H1 (cell line): ENCODE measurements at regions of chr2 and their contacts with region 1.

Region 1: GRCh38 chr2:217918308-217919024 is 84.3 kb downstream of the TNS1 start:
- DNase-seq: no peak
- H3K4me3 ChIP-seq: no peak overlapping the region
- H3K27ac ChIP-seq: no peak overlapping the region
- H3K4me1 ChIP-seq: peaks cover 9 to 48% (median 33%) of the 10 kb centered on the region in 4 experiments
- H3K27me3 ChIP-seq: peaks cover 0 to 4% (median 0%) of the 10 kb centered on the region in 4 experiments; a peak in 3 of 7 replicates
- CTCF ChIP-seq: peak; percentile 53 to 63 (median 55)
- EP300 ChIP-seq: no peak
- POLR2A ChIP-seq: no peak
- RAD21 ChIP-seq: peak in 1 of 2 experiments; percentile 45; a peak in 3 of 4 replicates

Region 2: DNA sequence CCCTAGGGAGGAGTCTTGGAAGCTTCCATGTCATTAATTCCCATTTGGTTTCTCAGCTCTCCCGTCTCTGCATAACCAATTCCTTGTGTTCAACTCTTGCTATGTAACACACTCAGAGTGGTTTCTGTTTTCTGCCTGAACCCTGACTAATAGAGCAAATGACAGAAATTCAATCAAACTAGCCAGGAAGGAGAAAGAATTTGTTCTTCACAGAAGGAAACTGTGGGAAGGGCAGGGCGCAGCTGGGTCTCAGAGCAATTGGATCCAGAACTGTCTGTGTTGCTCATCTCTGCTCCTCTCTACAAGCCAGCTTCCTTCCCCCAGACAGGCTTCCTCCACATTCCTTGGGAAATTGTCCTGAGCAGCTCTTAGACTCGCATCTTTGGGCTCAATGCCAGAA is 185.5 kb before region 1 on chr2:
- CTCF ChIA-PET with region 1: no interaction called
- POLR2A ChIA-PET with region 1: no interaction called
- DNase-seq: no peak
- H3K4me3 ChIP-seq: no peak overlapping the region
- H3K27ac ChIP-seq: no peak overlapping the region
- H3K4me1 ChIP-seq: no peaks in the 10 kb centered on the region
- H3K27me3 ChIP-seq: no peaks in the 10 kb centered on the region
- CTCF ChIP-seq: no peak
- EP300 ChIP-seq: no peak
- POLR2A ChIP-seq: no peak
- RAD21 ChIP-seq: no peak

Region 3: DNA sequence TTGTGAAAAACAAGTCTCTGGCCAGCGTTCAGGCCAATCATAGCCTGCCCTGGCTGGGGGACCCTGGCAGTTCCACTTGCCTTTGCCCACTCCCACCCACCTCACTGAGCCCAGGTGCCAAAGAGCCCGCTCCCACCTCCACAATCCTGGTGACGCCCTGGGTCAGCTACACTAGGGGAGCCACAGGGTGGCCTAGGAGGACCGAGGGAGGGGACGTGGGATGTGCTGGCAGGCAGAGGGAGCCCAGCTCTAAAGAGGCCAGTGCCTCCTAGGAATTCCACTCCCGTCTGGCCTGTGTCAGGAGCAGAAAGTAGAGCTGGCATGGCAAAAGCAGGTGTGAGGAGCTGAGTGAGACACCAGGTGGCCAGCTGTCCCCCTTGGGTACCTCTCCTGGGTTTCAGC is 35.1 kb after region 1 on chr2:
- CTCF ChIA-PET with region 1: interaction called, 14 read pairs
- POLR2A ChIA-PET with region 1: no interaction called
- DNase-seq: no peak
- H3K4me3 ChIP-seq: no peak overlapping the region
- H3K27ac ChIP-seq: no peak overlapping the region
- H3K4me1 ChIP-seq: peaks cover 0 to 10% (median 3%) of the 10 kb centered on the region in 4 experiments; a peak in 6 of 7 replicates
- H3K27me3 ChIP-seq: peaks cover 0 to 3% (median 0%) of the 10 kb centered on the region in 4 experiments; a peak in 1 of 7 replicates
- CTCF ChIP-seq: no peak
- EP300 ChIP-seq: no peak
- POLR2A ChIP-seq: no peak
- RAD21 ChIP-seq: no peak

Region 4: GRCh38 chr2:217978536-217979165 is 60.2 kb after region 1 on chr2:
- CTCF ChIA-PET with region 1: interaction called, 14 read pairs
- POLR2A ChIA-PET with region 1: interaction called, 3 read pairs
- DNase-seq: peak in 1 of 2 experiments; percentile 87
- H3K4me3 ChIP-seq: peak overlapping the region; percentile 37 to 78 (median 59)
- H3K27ac ChIP-seq: no peak overlapping the region
- H3K4me1 ChIP-seq: peaks cover 3 to 12% (median 7%) of the 10 kb centered on the region in 4 experiments
- H3K27me3 ChIP-seq: peaks cover 0 to 26% (median 20%) of the 10 kb centered on the region in 4 experiments; a peak in 6 of 7 replicates
- CTCF ChIP-seq: no peak
- EP300 ChIP-seq: no peak
- POLR2A ChIP-seq: peak in 1 of 2 experiments; percentile 25; a peak in 1 of 3 replicates
- RAD21 ChIP-seq: no peak